BJ (cell line): ENCODE measurements at regions of chr20 and their contacts with region 1.

Region 1: DNA sequence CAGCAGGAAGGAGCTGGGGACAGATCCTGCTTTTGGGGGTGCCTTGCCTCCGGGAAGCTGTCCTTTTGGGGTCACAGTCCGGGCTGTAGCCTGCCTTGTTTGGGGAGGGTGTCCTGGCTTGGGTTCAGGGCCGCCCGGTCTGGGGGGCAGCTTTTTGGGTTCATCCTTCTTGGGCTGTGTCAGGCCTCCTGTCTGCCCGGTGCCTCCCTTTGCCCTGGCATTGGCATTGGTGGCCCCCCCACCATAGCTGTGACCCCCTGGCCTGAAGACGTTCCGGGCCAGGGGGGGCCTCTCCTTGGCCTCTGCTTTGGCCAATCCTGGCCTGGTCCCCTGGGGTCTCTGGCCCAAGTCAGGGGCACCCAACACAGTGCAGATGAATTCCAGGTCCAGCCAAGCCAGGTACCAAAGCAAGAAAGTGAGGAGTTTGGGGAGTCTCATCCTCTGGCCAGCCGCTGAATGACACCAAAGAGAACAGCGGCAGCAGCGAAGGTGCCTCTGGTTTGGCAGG is 483 bp downstream of the GDF5 start:
- DNase-seq: no peak
- H3K4me3 ChIP-seq: peak overlapping the region; percentile 26
- H3K27me3 ChIP-seq: no peaks in the 10 kb centered on the region
- CTCF ChIP-seq: no peak

Region 2: GRCh38 chr20:35344354-35344837 is 93.1 kb before region 1 on chr20:
- CTCF ChIA-PET with region 1: interaction called, 33 read pairs
- POLR2A ChIA-PET with region 1: no interaction called
- DNase-seq: no peak
- H3K4me3 ChIP-seq: no peak overlapping the region
- H3K27me3 ChIP-seq: no peaks in the 10 kb centered on the region
- CTCF ChIP-seq: no peak

Region 3: DNA sequence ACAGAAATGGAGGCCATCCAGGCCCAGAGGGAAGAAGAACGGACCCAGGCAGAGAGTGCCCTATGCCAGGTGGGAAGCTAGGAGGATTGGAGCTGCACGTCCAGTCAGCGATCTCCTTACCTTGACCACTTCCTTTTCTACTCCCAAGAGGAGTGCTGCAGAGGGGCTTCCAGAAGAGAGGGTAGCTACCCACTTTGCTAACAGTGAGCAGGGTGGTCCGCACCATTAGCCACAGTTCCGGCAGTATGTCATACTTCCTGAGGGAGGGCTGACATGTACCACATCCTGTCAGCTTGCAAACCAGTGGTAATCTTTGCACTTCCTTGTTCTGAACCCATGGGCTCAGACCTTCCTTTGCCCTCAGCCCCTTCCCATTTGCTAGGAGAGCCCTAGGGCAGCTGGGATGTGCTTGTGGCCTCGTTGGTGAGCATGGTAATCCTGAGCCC is 53.2 kb after region 1 on chr20:
- CTCF ChIA-PET with region 1: no interaction called
- POLR2A ChIA-PET with region 1: no interaction called
- DNase-seq: no peak
- H3K4me3 ChIP-seq: no peak overlapping the region
- H3K27me3 ChIP-seq: no peaks in the 10 kb centered on the region
- CTCF ChIP-seq: no peak

Region 4: GRCh38 chr20:36941401-36941835 is 1503.9 kb after region 1 on chr20:
- CTCF ChIA-PET with region 1: no interaction called
- POLR2A ChIA-PET with region 1: interaction called, 11 read pairs
- DNase-seq: no peak
- H3K4me3 ChIP-seq: no peak overlapping the region
- H3K27me3 ChIP-seq: no peaks in the 10 kb centered on the region
- CTCF ChIP-seq: no peak